ENCODE measurements at regions of chr18 and their contacts with region 1.

Region 1: GRCh38 chr18:3245853-3246634 is 1.6 kb upstream of the MYL12A start:
- DNase-seq: peak; percentile 85
- H3K4me3 Mint-ChIP-seq: peak overlapping the region; percentile 99
- H3K27ac Mint-ChIP-seq: peak overlapping the region; percentile 100
- H3K4me1 Mint-ChIP-seq: peaks cover 29% of the 10 kb centered on the region
- H3K27me3 Mint-ChIP-seq: no peaks in the 10 kb centered on the region

Region 2: DNA sequence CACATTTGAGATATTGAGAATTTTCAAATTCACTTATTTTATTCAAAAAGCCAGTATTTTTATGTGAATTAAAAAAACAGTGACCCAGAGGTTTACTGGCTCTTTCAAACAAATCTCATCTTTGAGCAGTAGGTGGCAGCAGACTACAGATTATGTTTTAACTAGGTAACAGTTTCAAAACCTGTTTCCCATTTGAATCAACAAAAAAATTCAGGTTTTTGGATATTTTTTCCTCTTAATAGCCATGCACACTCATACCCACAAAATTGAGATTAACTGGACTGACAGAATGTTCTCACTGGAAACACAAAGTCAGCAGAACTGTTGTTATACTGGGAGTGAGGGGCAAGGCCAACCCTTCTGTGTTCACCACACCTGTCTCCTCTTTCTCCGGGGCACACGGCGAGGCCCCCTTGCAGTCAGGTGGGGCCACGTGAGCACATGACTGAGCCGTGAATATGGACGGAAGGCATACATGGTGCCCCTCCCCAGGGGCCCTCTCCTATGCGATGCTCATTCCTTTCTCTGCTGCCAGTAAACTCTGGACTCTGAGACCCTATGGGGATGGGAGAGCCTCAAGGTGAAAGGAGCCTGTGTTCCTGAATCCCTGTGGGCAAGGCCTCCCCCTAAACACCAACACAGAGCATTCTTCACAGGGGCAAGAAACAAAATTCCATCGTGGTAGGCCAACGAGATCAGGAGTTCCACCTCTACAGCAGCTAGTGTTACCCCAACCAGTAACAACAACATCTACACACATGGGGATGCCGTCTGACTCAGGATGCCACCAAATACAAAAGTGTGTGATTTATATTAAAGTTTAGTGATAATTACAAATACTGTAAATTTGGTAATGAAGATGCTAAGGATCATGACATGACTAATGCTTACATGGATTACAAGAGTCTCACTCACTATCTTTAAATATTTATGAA is 313.5 kb before region 1 on chr18:
- CTCF ChIA-PET with region 1: interaction called, 19 read pairs
- POLR2A ChIA-PET with region 1: interaction called, 4 read pairs
- DNase-seq: peak; percentile 36
- H3K4me3 Mint-ChIP-seq: no peak overlapping the region
- H3K27ac Mint-ChIP-seq: peak overlapping the region; percentile 20
- H3K4me1 Mint-ChIP-seq: peaks cover 28% of the 10 kb centered on the region
- H3K27me3 Mint-ChIP-seq: no peaks in the 10 kb centered on the region

Region 3: GRCh38 chr18:2978646-2979045 is 267.4 kb before region 1 on chr18:
- CTCF ChIA-PET with region 1: interaction called, 9 read pairs
- POLR2A ChIA-PET with region 1: interaction called, 22 read pairs
- DNase-seq: no peak
- H3K4me3 Mint-ChIP-seq: peak overlapping the region; percentile 63
- H3K27ac Mint-ChIP-seq: peak overlapping the region; percentile 78
- H3K4me1 Mint-ChIP-seq: peaks cover 83% of the 10 kb centered on the region
- H3K27me3 Mint-ChIP-seq: no peaks in the 10 kb centered on the region

Region 4: DNA sequence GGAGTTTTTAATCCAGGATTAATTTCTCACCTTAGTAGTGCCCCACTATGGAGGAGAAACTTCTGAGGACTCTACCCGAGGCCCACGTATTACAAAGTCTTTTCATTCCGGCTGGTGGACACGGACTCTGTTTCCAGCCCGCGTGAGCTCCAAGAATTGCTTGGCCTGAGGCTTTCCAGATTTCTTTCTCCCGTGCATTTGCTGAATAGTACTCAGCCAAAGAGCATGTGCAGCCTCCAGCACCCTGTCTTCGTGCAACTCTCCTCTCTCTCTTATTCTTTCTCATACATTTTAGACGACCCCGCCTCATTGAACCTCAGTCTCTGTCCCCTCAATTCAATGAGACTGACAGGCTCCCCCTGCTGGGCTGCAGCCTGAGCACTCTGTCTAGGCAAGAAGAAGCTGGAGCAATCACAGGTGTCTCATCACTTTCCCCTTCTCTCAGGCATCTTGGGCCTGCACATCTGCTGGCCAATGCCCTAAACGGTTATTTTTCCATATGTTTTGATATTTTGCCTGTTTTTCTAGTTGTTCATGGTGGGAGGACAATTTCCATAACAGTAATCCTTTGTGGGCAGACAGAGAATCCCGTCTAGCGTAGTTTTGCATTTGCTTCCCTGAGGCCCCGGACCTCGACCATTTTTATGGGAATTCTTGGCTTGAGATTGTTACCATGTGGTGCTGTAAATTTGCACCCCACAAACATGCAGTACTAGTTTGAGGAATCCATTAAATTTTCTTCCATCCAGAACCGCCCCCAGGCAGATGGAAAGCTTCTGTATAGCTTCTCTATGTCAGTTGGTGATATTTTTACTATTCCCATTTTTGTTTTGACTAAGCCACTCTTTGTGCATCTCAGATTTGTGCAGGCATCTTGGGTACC is 183.0 kb before region 1 on chr18:
- CTCF ChIA-PET with region 1: interaction called, 44 read pairs
- POLR2A ChIA-PET with region 1: interaction called, 100 read pairs
- DNase-seq: peak; percentile 83
- H3K4me3 Mint-ChIP-seq: peak overlapping the region; percentile 70
- H3K27ac Mint-ChIP-seq: peak overlapping the region; percentile 91
- H3K4me1 Mint-ChIP-seq: peaks cover 67% of the 10 kb centered on the region
- H3K27me3 Mint-ChIP-seq: no peaks in the 10 kb centered on the region

Region 5: DNA sequence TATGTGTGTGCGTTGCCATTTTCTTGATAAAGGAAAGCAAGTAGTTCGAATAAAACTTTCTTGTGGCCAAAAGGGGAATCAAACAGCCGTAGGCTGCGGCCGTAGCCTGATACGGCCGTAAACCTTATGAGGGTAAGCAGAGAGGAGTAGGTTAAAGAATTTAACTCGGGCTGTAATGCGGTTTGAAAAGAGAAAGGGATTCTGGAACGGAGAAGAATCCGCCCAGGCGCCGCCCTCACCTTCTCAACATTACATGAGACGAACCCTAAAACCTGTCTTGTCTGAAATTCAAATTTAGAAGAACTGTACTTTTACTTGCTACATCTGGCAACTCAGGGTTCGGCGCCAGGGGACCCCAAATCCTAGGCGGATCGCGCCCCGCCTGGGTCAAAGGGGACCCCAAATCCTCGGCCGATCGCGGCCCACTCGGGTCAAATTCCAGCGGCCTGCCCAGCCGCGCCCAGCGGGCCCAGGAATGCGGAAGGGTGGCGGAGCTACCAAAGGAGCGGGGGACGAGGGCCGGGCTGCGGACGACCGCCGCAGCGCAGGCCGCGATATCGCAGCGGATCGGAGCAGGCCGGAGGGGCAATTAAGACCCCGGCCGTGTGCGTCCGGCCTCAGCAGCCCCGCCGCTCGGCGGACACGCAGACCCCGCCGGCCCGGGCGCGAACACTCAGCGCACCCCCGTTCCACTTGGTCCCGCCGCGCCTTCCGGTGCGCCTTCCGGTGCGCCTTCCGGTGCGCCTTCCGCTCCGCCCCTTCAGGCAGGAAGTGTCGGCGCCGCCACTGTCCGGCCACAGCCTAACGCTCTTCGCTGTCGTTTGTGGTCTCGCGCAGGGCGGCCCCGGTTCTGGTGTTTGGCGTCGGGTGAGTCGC is 15.6 kb after region 1 on chr18 and contains the start of gene MYL12B:
- CTCF ChIA-PET with region 1: interaction called, 16 read pairs
- POLR2A ChIA-PET with region 1: interaction called, 292 read pairs
- DNase-seq: peak; percentile 86
- H3K4me3 Mint-ChIP-seq: peak within 1 kb of the TSS; percentile 89
- H3K27ac Mint-ChIP-seq: peak within 1 kb of the TSS; percentile 99
- H3K4me1 Mint-ChIP-seq: peaks cover 71% of the 10 kb centered on the region
- H3K27me3 Mint-ChIP-seq: no peaks in the 10 kb centered on the region
- total RNA-seq, gene MYL12B: 371 to 378 TPM

Region 6: GRCh38 chr18:3286159-3286558 is 40.1 kb after region 1 on chr18:
- CTCF ChIA-PET with region 1: no interaction called
- POLR2A ChIA-PET with region 1: no interaction called
- DNase-seq: no peak
- H3K4me3 Mint-ChIP-seq: no peak overlapping the region
- H3K27ac Mint-ChIP-seq: no peak overlapping the region
- H3K4me1 Mint-ChIP-seq: no peaks in the 10 kb centered on the region
- H3K27me3 Mint-ChIP-seq: peaks cover 7% of the 10 kb centered on the region

Region 7: DNA sequence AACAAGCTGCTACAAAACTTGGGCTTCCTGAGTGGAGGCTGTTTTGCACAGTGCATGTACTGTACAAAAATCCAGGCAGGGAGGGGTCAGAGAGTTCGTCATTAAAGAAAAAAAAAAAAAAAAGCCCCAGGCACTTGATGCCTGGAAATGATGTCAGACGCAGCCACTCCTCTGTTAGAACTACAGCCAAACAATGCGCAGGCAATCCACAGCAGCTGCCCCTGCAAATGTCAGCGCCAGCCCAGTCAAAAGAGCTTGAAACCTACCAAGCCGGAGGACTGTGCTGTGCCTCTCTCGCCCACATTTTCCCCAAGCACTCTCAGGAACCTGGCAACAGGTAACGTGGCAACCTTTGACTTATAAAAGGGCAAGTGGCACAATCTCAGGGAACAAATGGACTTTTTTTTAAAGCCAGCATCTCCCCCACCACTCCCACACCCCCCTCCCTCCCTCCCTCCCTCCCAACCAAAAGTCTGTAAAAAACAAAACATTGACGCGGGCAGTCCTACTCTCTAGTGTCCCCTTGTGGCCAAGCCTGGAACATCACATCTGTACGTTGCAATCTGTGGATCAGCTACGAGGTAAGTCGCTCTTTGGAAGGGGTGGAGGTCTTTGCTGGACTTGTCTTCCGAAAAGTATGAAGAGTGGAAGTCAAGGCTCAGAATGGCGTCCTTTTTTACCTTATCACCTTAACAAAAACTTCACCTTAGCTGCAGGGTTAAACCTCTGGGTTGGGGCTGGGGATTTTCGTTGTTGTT is 348.0 kb after region 1 on chr18:
- CTCF ChIA-PET with region 1: interaction called, 11 read pairs
- POLR2A ChIA-PET with region 1: interaction called, 63 read pairs
- DNase-seq: peak; percentile 91
- H3K4me3 Mint-ChIP-seq: peak overlapping the region; percentile 92
- H3K27ac Mint-ChIP-seq: peak overlapping the region; percentile 98
- H3K4me1 Mint-ChIP-seq: peaks cover 50% of the 10 kb centered on the region
- H3K27me3 Mint-ChIP-seq: no peaks in the 10 kb centered on the region